Activated T-helper 2 cell treated with anti-CD3 and anti-CD28 coated beads, Interferon-gamma antibody, Interleukin-2, Interleukin-4, amounts not matched to agents 10 μg/mL and 5 μg/mL and 100 μg/mL, durations not matched to agents 14 hours and 24 hours and 36 hours (primary cell): ENCODE measurements at regions of chr5 and their contacts with region 1.

Region 1: DNA sequence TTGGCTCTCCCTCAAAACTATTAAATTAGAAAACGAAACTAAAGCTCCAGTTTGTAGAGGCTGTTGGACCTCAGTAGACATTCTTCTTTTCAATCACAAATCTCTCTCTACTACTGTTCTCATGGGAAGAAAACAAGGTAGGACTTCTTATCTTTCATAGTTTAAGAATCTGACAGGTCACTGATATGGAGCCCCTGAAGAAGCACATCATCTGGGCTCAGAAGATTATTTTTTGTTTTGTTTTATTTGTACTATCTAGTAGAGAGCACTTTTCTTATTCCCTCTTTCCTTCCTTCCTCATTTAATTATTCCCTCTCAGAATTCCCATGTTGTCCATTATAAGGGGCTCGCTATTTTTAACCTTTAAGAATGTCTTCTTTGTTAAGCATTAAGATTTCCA is 26.3 kb downstream of the STARD4 start:
- DNase-seq: no peak
- H3K4me3 Mint-ChIP-seq: no peak overlapping the region
- H3K27ac Mint-ChIP-seq: no peak overlapping the region
- H3K4me1 Mint-ChIP-seq: peaks cover 14% of the 10 kb centered on the region
- H3K27me3 Mint-ChIP-seq: no peaks in the 10 kb centered on the region

Region 2: DNA sequence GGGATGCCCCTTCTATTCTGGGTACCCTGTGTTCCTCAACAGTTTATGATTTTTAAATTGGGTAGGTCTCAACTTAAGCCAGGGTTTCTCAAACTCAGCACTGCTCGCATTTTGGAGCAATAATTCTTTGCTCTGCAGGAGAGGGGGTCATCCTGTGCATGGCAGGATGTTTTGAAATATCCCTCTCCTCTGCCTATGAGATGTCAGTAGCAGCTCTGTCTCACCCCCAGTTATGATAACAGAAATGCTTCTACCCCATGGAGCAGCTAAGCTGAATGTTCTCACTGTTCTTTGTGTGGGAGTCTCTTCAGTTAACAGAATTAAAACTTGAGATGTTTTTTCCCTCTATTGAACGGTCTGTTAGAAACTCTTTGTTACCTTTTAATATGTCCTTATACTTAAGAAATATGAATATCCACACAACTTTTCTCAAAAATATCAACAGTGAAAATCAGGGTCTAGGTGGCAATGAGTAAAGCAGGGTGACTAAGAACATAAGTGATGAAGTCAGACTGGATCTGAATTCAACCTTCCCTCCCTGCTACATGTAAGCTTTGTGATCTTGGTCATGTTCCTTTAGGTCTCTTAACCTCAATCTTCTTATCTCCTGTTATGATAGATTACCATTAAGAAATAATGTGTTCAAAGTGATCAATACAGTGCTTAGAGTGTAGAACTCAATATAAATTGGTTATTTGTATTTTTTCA is 172.9 kb before region 1 on chr5:
- intact Hi-C with region 1: loop called (anchors 10 kb)
- DNase-seq: no peak
- H3K4me3 Mint-ChIP-seq: no peak overlapping the region
- H3K27ac Mint-ChIP-seq: peak overlapping the region; percentile 80
- H3K4me1 Mint-ChIP-seq: peaks cover 52% of the 10 kb centered on the region
- H3K27me3 Mint-ChIP-seq: no peaks in the 10 kb centered on the region